IMR-90 (cell line): ENCODE measurements at regions of chr6 and their contacts with region 1.

Region 1: GRCh38 chr6:5497896-5498578 is 236.7 kb downstream of the FARS2 start:
- DNase-seq: peak; percentile 62
- ATAC-seq: peak; percentile 61; the same call in 1 of the 2 replicates
- H3K4me3 ChIP-seq: peak overlapping the region; percentile 20; the same call in 1 of the 2 replicates
- H3K27ac ChIP-seq: no peak overlapping the region
- H3K4me1 ChIP-seq: peaks cover 5% of the 10 kb centered on the region; the same call in 1 of the 2 replicates
- H3K27me3 ChIP-seq: no peaks in the 10 kb centered on the region
- CTCF ChIP-seq: no peak
- POLR2A ChIP-seq: no peak
- RAD21 ChIP-seq: no peak

Region 2: GRCh38 chr6:5435449-5435848 is 62.6 kb before region 1 on chr6:
- CTCF ChIA-PET with region 1: no interaction called
- POLR2A ChIA-PET with region 1: no interaction called
- dilution Hi-C with region 1: no loop called
- in situ Hi-C with region 1: no loop called
- intact Hi-C with region 1: loop called (anchors 5 kb)
- DNase-seq: peak; percentile 86
- ATAC-seq: peak; percentile 83
- H3K4me3 ChIP-seq: no peak overlapping the region
- H3K27ac ChIP-seq: no peak overlapping the region
- H3K4me1 ChIP-seq: no peaks in the 10 kb centered on the region
- H3K27me3 ChIP-seq: no peaks in the 10 kb centered on the region
- CTCF ChIP-seq: no peak
- POLR2A ChIP-seq: no peak
- RAD21 ChIP-seq: no peak